Natural killer cell (primary cell): ENCODE measurements at regions of chr10 and their contacts with region 1.

Region 1: DNA sequence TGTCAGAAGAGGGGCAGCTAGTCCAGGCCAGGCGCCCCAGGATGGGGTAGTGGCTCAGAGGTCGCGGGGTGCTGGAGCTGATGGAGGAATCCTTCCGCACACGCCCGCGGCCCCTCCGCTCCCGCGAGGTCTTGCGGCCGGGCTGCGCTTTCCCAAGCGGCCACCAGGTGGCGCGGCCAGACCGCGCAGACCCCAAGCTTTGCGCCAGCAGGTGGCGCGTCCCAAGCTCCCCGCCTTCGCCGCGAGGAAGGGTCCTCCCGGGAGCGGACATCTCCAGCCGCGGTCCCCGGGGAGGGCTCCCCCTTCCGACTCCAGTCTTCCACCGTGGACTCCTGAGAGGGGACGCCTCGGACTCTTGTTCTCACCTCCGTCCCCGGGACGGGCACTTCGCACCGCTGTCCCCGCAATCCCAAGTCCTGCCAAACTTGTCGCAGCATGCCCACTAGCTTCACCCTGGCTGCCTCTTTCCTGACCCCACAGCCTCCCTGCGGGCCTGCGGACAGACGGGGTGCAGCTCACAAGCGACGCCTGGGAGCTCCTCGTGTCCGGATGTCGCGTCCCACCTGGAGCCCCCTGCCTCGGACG is 19.4 kb downstream of the KCNK18 start:
- DNase-seq: peak; percentile 71 to 87
- ATAC-seq: peak; percentile 88 to 94 (median 93)
- H3K4me3 ChIP-seq: peak overlapping the region; percentile 44
- H3K4me3 Mint-ChIP-seq: peak overlapping the region; percentile 81
- H3K27ac ChIP-seq: no peak overlapping the region
- H3K27ac Mint-ChIP-seq: no peak overlapping the region
- H3K4me1 ChIP-seq: peaks cover 14% of the 10 kb centered on the region
- H3K4me1 Mint-ChIP-seq: peaks cover 0 to 13% of the 10 kb centered on the region in 2 donors
- H3K27me3 ChIP-seq: peaks cover 16% of the 10 kb centered on the region
- H3K27me3 Mint-ChIP-seq: peaks cover 28 to 29% of the 10 kb centered on the region in 2 donors
- CTCF ChIP-seq: peak; percentile 100

Region 2: DNA sequence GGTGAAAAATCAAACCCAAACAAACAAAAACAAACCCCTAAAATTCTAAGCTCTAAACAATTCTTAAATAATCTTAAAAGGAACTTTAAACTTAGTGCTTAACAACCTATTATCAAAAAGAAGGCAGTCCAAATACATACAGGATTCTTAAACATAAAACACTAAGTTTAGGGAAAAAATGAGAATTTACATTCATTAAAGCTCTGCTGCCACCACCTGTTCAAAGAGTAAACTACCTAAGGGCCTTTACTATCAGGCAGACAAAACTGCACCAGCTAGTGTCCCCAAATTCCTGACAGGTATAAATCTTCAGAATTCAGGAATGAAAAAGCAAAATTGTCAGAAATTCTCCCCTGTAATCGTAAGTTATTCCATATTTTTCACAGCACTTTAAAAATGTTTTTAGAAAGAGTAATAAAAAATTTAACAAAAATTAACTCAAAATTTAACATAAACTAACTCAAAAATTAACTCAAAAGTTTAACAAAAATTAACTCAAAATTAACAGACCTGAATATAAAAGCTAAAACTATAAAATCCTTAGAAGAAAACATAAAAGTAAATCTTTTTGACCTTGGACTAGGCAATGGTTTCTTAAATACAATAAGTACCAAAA is 103.5 kb after region 1 on chr10:
- intact Hi-C with region 1: loop called (anchors 5 kb)
- DNase-seq: peak in 1 of 2 donors; percentile 48
- ATAC-seq: peak in 2 of 3 donors; percentile 36 to 57
- H3K4me3 ChIP-seq: no peak overlapping the region
- H3K4me3 Mint-ChIP-seq: no peak overlapping the region
- H3K27ac ChIP-seq: no peak overlapping the region
- H3K27ac Mint-ChIP-seq: no peak overlapping the region
- H3K4me1 ChIP-seq: no peaks in the 10 kb centered on the region
- H3K4me1 Mint-ChIP-seq: peaks cover 14 to 16% of the 10 kb centered on the region in 2 donors
- H3K27me3 ChIP-seq: no peaks in the 10 kb centered on the region
- H3K27me3 Mint-ChIP-seq: no peaks in the 10 kb centered on the region
- CTCF ChIP-seq: peak; percentile 60

Region 3: GRCh38 chr10:117442944-117443685 is 226.4 kb after region 1 on chr10:
- intact Hi-C with region 1: loop called (anchors 10 kb)
- DNase-seq: peak; percentile 61
- ATAC-seq: peak; percentile 61 to 85 (median 82)
- H3K4me3 ChIP-seq: no peak overlapping the region
- H3K4me3 Mint-ChIP-seq: no peak overlapping the region
- H3K27ac ChIP-seq: no peak overlapping the region
- H3K27ac Mint-ChIP-seq: no peak overlapping the region
- H3K4me1 ChIP-seq: peaks cover 9% of the 10 kb centered on the region
- H3K4me1 Mint-ChIP-seq: peaks cover 0 to 7% of the 10 kb centered on the region in 2 donors
- H3K27me3 ChIP-seq: peaks cover 6% of the 10 kb centered on the region
- H3K27me3 Mint-ChIP-seq: peaks cover 18 to 26% of the 10 kb centered on the region in 2 donors
- CTCF ChIP-seq: peak; percentile 91

Region 4: DNA sequence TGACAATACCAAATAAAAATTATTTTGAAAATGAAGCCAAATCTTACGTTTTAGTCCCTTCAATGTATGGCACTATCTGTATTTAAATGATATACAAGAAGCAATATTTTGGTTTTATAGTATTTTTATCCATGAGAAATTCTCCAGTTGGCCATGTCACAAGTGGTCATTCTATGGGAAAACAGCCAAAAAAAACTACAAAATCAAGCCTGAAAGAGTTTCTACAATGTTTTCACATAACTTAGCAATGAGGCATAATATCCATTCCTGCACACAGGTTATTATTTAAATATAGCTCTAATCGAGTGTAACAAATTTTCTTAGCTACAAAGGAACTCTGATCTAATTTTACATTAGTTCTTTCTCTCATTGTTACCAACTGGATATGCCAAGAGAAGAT is 824.6 kb after region 1 on chr10:
- intact Hi-C with region 1: no loop called
- DNase-seq: no peak
- ATAC-seq: no peak
- H3K4me3 ChIP-seq: no peak overlapping the region
- H3K4me3 Mint-ChIP-seq: no peak overlapping the region
- H3K27ac ChIP-seq: no peak overlapping the region
- H3K27ac Mint-ChIP-seq: no peak overlapping the region
- H3K4me1 ChIP-seq: peaks cover 6% of the 10 kb centered on the region
- H3K4me1 Mint-ChIP-seq: peaks cover 19 to 27% of the 10 kb centered on the region in 2 donors
- H3K27me3 ChIP-seq: no peaks in the 10 kb centered on the region
- H3K27me3 Mint-ChIP-seq: no peaks in the 10 kb centered on the region
- CTCF ChIP-seq: no peak

Region 5: DNA sequence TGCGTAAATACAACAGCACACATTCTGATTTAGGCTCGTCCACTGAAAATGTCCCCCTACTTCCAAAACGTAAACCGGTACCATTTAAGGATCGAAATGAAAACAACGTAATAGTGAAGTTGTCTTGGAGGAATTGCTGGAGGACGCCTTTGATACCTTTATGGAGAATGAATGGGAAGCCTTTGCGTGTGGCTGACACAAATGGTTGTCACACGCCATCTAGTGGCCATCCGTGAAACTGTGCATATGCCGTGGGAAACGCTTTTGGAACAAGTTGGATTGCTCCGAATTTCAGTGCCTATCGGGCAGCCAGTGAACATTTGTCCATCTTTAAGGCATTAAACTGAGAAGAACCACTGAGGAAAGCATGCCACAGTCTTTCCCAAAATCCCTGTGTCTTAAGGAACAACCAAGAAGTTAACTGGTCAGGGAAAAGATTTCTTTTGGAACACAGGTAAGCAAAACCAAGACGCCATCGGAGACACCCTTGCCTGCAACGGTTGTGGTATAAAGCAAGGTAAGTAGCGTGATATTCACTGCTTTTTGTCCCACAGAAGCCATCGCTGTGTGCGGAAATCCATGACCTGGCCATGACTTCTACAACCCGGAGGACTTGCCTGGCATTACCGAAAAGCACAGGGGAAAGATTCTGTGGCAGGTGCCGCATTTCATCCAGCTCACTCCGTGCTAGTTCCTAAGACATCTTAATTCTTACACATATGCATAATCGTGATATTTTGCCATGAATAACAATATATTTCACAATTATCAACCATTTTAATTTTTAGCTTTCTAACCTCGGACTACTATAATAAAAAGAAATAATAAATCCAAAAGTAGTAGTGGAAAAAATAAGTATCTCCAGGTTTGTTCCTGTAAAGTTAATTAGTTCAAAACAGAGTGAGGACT is 1024.8 kb after region 1 on chr10:
- intact Hi-C with region 1: loop called (anchors 2 kb)
- DNase-seq: peak; percentile 43 to 79
- ATAC-seq: peak in 1 of 3 donors; percentile 61
- H3K4me3 ChIP-seq: no peak overlapping the region
- H3K4me3 Mint-ChIP-seq: no peak overlapping the region
- H3K27ac ChIP-seq: no peak overlapping the region
- H3K27ac Mint-ChIP-seq: no peak overlapping the region
- H3K4me1 ChIP-seq: no peaks in the 10 kb centered on the region
- H3K4me1 Mint-ChIP-seq: peaks cover 0 to 8% of the 10 kb centered on the region in 2 donors
- H3K27me3 ChIP-seq: peaks cover 12% of the 10 kb centered on the region
- H3K27me3 Mint-ChIP-seq: peaks cover 29 to 30% of the 10 kb centered on the region in 2 donors
- CTCF ChIP-seq: peak; percentile 95